B cell (primary cell): ENCODE measurements at regions of chr5 and their contacts with region 1.

Region 1: DNA sequence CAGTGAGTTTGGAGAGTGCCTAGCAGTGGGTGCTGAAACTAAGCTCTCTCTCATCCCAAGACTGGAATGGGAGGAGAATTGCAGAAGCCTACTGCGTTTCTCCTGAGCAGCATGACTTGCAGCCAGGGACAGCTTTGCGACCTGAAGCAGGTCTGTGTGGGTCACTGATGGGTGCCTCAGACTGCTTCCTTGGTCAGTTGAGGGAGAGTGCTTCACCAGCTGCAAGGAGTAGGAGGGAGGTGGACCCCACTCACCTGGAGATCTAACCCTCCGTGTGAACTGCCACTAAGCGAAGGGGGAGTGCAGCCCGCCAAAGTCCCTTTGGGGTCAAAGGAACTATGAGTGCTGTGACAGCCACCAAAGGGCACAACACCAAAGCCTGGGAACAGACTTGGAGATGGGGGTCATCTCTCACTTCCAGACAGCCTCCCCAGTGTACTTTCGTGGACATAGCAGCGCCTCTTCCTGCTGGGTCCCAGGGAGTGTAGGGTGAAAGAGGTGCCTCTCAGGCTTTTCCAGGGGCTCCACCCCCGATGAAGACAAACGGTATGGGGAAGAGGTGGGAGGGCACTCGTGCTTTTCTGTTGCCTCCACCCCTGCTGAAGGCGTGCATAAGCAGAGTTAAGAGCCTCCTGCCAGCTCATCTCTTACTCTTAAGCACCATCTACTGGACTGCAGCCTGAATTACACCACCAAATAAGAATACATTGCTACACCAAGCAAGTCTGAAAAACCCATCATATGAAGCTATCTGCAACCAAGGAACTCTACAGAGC is 34.3 kb upstream of the MACIR start:
- DNase-seq: peak; percentile 63
- ATAC-seq: peak; percentile 96
- H3K4me3 ChIP-seq: no peak overlapping the region
- H3K4me3 Mint-ChIP-seq: no peak overlapping the region
- H3K27ac ChIP-seq: no peak overlapping the region
- H3K27ac Mint-ChIP-seq: no peak overlapping the region
- H3K4me1 ChIP-seq: peaks cover 0 to 3% of the 10 kb centered on the region in 2 donors
- H3K4me1 Mint-ChIP-seq: peaks cover 2% of the 10 kb centered on the region
- H3K27me3 ChIP-seq: no peaks in the 10 kb centered on the region
- H3K27me3 Mint-ChIP-seq: peaks cover 17% of the 10 kb centered on the region
- CTCF ChIP-seq: peak; percentile 78

Region 2: GRCh38 chr5:102583276-102584124 is 640.8 kb before region 1 on chr5:
- CTCF ChIA-PET with region 1: no interaction called
- POLR2A ChIA-PET with region 1: no interaction called
- intact Hi-C with region 1: loop called (anchors 2 kb)
- DNase-seq: peak; percentile 18
- ATAC-seq: no peak
- H3K4me3 ChIP-seq: no peak overlapping the region
- H3K4me3 Mint-ChIP-seq: no peak overlapping the region
- H3K27ac ChIP-seq: no peak overlapping the region
- H3K27ac Mint-ChIP-seq: no peak overlapping the region
- H3K4me1 ChIP-seq: no peaks in the 10 kb centered on the region
- H3K4me1 Mint-ChIP-seq: no peaks in the 10 kb centered on the region
- H3K27me3 ChIP-seq: no peaks in the 10 kb centered on the region
- H3K27me3 Mint-ChIP-seq: peaks cover 3% of the 10 kb centered on the region
- CTCF ChIP-seq: peak; percentile 65

Region 3: DNA sequence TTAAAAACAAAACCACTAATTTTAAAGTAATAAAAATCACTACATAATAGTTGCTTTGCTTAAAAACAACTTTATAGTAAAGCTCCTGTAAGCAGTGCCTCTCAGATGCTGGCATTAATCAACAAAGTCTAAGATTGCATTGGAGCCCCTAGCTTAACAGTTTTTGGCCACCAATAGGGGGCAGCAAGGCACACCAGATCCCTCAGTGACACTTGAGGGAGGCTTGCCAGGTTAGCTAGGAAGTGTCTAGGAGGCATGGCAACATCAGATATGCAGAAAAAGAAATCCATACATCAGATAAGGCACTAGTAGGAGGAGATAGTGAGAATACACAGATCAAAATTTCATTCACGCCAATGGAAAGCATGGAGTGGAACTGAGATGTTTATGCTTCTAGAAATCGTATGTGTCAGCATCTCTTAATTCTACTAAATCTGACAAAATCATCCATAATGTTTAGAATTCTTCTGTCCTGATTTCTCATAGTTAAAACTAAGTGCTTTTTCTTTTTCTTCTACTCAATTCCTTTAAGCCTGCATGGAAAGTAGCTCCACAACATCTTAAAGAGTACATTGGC is 542.8 kb before region 1 on chr5:
- CTCF ChIA-PET with region 1: interaction called, 5 read pairs
- POLR2A ChIA-PET with region 1: no interaction called
- intact Hi-C with region 1: loop called (anchors 2 kb)
- DNase-seq: peak; percentile 28
- ATAC-seq: peak; percentile 47
- H3K4me3 ChIP-seq: no peak overlapping the region
- H3K4me3 Mint-ChIP-seq: no peak overlapping the region
- H3K27ac ChIP-seq: no peak overlapping the region
- H3K27ac Mint-ChIP-seq: no peak overlapping the region
- H3K4me1 ChIP-seq: no peaks in the 10 kb centered on the region
- H3K4me1 Mint-ChIP-seq: no peaks in the 10 kb centered on the region
- H3K27me3 ChIP-seq: peaks cover 0 to 2% (median 0%) of the 10 kb centered on the region in 4 experiments
- H3K27me3 Mint-ChIP-seq: no peaks in the 10 kb centered on the region
- CTCF ChIP-seq: peak; percentile 64

Region 4: GRCh38 chr5:103262422-103262871 is 38.1 kb after region 1 on chr5:
- CTCF ChIA-PET with region 1: no interaction called
- POLR2A ChIA-PET with region 1: no interaction called
- intact Hi-C with region 1: no loop called
- DNase-seq: no peak
- ATAC-seq: no peak
- H3K4me3 ChIP-seq: no peak overlapping the region
- H3K4me3 Mint-ChIP-seq: no peak overlapping the region
- H3K27ac ChIP-seq: no peak overlapping the region
- H3K27ac Mint-ChIP-seq: no peak overlapping the region
- H3K4me1 ChIP-seq: peaks cover 8 to 12% of the 10 kb centered on the region in 2 donors
- H3K4me1 Mint-ChIP-seq: peaks cover 19% of the 10 kb centered on the region
- H3K27me3 ChIP-seq: no peaks in the 10 kb centered on the region
- H3K27me3 Mint-ChIP-seq: no peaks in the 10 kb centered on the region
- CTCF ChIP-seq: no peak

Region 5: GRCh38 chr5:104452550-104452949 is 1228.2 kb after region 1 on chr5:
- CTCF ChIA-PET with region 1: no interaction called
- POLR2A ChIA-PET with region 1: no interaction called
- intact Hi-C with region 1: no loop called
- DNase-seq: no peak
- ATAC-seq: no peak
- H3K4me3 ChIP-seq: no peak overlapping the region
- H3K4me3 Mint-ChIP-seq: no peak overlapping the region
- H3K27ac ChIP-seq: no peak overlapping the region
- H3K27ac Mint-ChIP-seq: no peak overlapping the region
- H3K4me1 ChIP-seq: no peaks in the 10 kb centered on the region
- H3K4me1 Mint-ChIP-seq: no peaks in the 10 kb centered on the region
- H3K27me3 ChIP-seq: no peaks in the 10 kb centered on the region
- H3K27me3 Mint-ChIP-seq: no peaks in the 10 kb centered on the region
- CTCF ChIP-seq: no peak